GM12878 (cell line): ENCODE measurements at regions of chr10 and their contacts with region 1.

Region 1: GRCh38 chr10:107275806-107276205 is 111.3 kb upstream of the SORCS1 start:
- DNase-seq: no peak
- ATAC-seq: no peak
- H3K4me3 ChIP-seq: no peak overlapping the region
- H3K27ac ChIP-seq: no peak overlapping the region
- H3K4me1 ChIP-seq: no peaks in the 10 kb centered on the region
- H3K27me3 ChIP-seq: no peaks in the 10 kb centered on the region
- CTCF ChIP-seq: no peak
- EP300 ChIP-seq: no peak
- POLR2A ChIP-seq: no peak
- RAD21 ChIP-seq: no peak

Region 2: DNA sequence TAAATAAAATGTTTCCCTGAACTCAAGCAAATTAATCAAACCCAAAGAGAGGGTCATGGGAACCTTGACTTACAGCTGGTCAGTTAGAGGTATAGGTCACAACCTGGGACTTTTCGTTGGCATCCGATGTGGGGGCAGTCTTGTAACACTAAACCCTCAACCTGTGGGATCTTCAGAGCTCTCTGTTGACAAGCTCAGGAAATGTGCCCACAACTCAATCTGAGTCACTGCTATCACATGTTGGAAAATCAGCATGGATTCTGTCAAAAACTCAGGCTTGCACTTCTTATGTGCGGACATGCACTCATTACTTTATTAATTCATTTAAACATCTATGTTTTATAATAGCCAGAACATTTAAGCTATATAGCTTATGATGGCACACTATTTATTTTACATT is 313.3 kb after region 1 on chr10:
- CTCF ChIA-PET with region 1: no interaction called
- POLR2A ChIA-PET with region 1: no interaction called
- RAD21 ChIA-PET with region 1: no interaction called
- SMC1A ChIA-PET with region 1: no interaction called
- in situ Hi-C with region 1: no loop called
- intact Hi-C with region 1: no loop called
- DNase-seq: no peak
- ATAC-seq: no peak
- H3K4me3 ChIP-seq: no peak overlapping the region
- H3K27ac ChIP-seq: no peak overlapping the region
- H3K4me1 ChIP-seq: no peaks in the 10 kb centered on the region
- H3K27me3 ChIP-seq: no peaks in the 10 kb centered on the region
- CTCF ChIP-seq: no peak
- EP300 ChIP-seq: no peak
- POLR2A ChIP-seq: no peak
- RAD21 ChIP-seq: no peak

Region 3: GRCh38 chr10:108147346-108147745 is 871.5 kb after region 1 on chr10:
- CTCF ChIA-PET with region 1: no interaction called
- POLR2A ChIA-PET with region 1: no interaction called
- RAD21 ChIA-PET with region 1: no interaction called
- SMC1A ChIA-PET with region 1: no interaction called
- in situ Hi-C with region 1: no loop called
- intact Hi-C with region 1: loop called (anchors 5 kb)
- DNase-seq: no peak
- ATAC-seq: no peak
- H3K4me3 ChIP-seq: no peak overlapping the region
- H3K27ac ChIP-seq: no peak overlapping the region
- H3K4me1 ChIP-seq: no peaks in the 10 kb centered on the region
- H3K27me3 ChIP-seq: no peaks in the 10 kb centered on the region
- CTCF ChIP-seq: no peak
- EP300 ChIP-seq: no peak
- POLR2A ChIP-seq: no peak
- RAD21 ChIP-seq: no peak